ENCODE measurements at regions of chr1 and their contacts with region 1.

Region 1: GRCh38 chr1:154335025-154335714 is 9.8 kb downstream of the ATP8B2 start:
- DNase-seq: peak; percentile 92
- H3K4me3 ChIP-seq: no peak overlapping the region
- H3K27ac ChIP-seq: no peak overlapping the region
- H3K4me1 ChIP-seq: no peaks in the 10 kb centered on the region
- H3K27me3 ChIP-seq: no peaks in the 10 kb centered on the region
- CTCF ChIP-seq: peak; percentile 92

Region 2: DNA sequence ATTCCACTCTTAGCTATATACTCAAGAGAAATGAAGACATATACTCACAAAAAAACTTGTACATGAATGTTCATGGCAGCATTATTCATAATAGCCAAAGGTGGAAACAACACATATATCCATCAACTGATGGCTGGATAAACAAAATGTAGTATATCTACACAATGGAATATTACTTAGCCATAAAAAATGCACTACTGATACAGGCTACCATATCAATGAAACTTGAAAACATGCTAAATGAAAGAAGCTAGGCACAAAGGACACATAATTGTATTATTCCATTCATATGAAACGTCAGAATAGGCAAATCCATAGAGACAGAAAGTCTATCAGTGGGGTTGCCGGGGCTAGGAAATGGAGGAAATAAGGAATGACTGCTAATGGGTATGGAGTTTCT is 247.6 kb before region 1 on chr1:
- CTCF ChIA-PET with region 1: no interaction called
- POLR2A ChIA-PET with region 1: no interaction called
- intact Hi-C with region 1: no loop called
- DNase-seq: no peak
- H3K4me3 ChIP-seq: no peak overlapping the region
- H3K27ac ChIP-seq: no peak overlapping the region
- H3K4me1 ChIP-seq: no peaks in the 10 kb centered on the region
- H3K27me3 ChIP-seq: no peaks in the 10 kb centered on the region
- CTCF ChIP-seq: no peak

Region 3: GRCh38 chr1:154272217-154272998 is 62.8 kb before region 1 on chr1 and contains the start of gene HAX1:
- CTCF ChIA-PET with region 1: interaction called, 10 read pairs
- POLR2A ChIA-PET with region 1: no interaction called
- intact Hi-C with region 1: no loop called
- DNase-seq: peak; percentile 98
- H3K4me3 ChIP-seq: peak within 1 kb of the TSS; percentile 85
- H3K27ac ChIP-seq: peak within 1 kb of the TSS; percentile 86
- H3K4me1 ChIP-seq: peaks cover 7% of the 10 kb centered on the region
- H3K27me3 ChIP-seq: no peaks in the 10 kb centered on the region
- CTCF ChIP-seq: peak; percentile 84
- total RNA-seq, gene HAX1: 129 and 134 TPM in 2 replicates